ENCODE measurements at regions of chr5 and their contacts with region 1.

Region 1: DNA sequence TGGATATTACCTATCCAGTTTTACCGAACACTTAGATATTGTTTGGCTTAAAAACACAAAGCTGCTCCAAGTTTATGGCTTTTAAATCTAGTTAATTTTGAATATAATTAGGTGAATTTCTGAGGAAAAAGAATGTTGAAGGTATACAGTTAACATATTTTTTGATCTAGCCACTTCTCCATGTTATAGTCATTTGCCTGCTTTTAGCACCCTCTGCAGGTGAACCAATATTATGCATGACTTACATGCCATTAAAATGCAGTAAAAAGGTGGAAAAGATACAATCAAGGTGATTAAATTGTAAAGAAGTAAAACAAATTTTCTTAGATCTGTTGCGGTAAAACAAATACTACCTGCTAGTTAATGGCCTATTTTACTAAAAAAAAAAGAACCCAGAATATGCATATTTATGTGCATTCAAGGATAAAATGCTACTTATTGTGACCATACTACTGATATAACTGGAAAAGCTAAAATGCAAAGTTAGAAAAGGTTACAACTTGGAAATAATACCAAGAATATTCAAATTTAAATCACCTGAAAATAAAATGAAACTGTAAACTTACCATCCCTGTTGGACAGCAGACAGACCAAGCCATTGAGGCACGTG is 132.1 kb downstream of the AP3B1 start:
- DNase-seq: peak; percentile 41
- ATAC-seq: no peak
- H3K4me3 ChIP-seq: no peak overlapping the region
- H3K27ac ChIP-seq: no peak overlapping the region
- H3K4me1 ChIP-seq: no peaks in the 10 kb centered on the region
- H3K27me3 ChIP-seq: no peaks in the 10 kb centered on the region
- CTCF ChIP-seq: peak; percentile 37 to 75 (median 56); a peak in 5 of 6 replicates
- POLR2A ChIP-seq: no peak
- RAD21 ChIP-seq: peak; percentile 67

Region 2: DNA sequence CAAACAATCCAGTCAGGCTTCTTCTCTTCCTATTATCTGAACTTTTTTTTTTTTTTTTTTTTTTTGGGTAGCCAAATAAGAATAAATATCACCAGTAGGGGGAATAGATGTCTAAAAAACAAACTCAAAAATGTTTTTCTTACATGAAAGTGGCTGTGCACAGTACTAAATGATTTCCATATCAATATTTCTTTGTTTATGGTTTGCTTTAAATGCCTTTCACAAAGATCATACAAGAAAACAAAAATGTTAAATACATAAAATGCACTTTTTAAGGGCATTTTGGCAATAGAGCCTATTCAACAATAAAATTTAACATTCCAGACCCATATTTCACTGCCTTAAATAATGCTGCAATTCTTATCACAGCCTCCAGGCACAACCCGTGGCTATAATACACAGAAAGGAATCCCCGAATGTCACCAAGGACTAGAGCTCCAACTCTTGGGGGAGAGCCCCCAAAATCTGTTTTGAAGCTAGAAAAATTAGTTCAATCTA is 295.1 kb before region 1 on chr5:
- CTCF ChIA-PET with region 1: no interaction called
- POLR2A ChIA-PET with region 1: no interaction called
- RAD21 ChIA-PET with region 1: no interaction called
- intact Hi-C with region 1: loop called (anchors 10 kb)
- DNase-seq: no peak
- ATAC-seq: peak; percentile 85
- H3K4me3 ChIP-seq: no peak overlapping the region
- H3K27ac ChIP-seq: no peak overlapping the region
- H3K4me1 ChIP-seq: no peaks in the 10 kb centered on the region
- H3K27me3 ChIP-seq: no peaks in the 10 kb centered on the region
- CTCF ChIP-seq: peak; percentile 12 to 42 (median 38); a peak in 4 of 6 replicates
- POLR2A ChIP-seq: no peak
- RAD21 ChIP-seq: peak; percentile 32; the same call in 1 of the 2 replicates